BJ (cell line): ENCODE measurements at regions of chr17 and their contacts with region 1.

Region 1: DNA sequence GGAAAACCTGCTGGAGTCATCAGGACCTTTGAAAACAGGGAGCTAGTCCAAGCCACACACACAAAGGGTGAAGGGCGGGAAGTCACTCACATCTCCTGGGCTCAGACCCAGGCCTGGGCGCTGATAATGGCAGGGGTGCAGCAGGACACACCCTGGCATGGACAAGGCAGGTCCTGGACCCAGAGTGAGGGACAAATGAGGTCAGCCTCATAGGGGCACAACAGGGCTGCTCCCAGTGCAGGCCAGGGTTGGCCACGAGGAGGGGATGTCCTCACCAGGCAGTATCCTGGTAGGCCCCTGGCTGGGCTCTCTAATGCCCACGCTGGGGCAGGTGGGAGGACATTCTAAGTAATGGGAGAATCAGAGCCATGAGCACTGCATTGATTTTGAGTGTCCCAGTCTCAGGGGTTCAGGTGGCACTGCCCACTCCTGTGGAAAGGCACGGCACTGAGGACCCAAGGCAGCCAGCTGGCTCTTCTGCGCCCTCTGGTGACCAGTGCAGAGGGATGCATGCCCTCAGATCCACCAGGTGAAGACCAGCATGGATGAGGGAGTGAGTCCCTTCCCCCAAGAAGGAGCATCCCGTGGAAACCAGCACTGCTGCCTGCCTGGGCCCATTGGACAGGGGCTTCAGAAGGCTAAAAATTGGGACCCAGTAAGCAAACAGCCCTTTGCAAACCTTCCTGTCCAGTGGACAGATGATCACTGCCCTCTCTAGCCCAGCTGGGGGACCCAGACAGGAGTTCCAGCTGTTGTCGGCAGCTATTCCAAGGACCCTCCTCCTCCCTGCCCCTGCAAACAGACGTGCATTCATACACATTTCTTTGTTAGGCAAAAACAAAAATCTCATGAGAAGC is 23.4 kb upstream of the SREBF1 start:
- DNase-seq: no peak
- H3K4me3 ChIP-seq: no peak overlapping the region
- H3K27me3 ChIP-seq: no peaks in the 10 kb centered on the region
- CTCF ChIP-seq: peak; percentile 96

Region 2: GRCh38 chr17:17681187-17681848 is 178.8 kb before region 1 on chr17 and contains the start of gene RAI1:
- CTCF ChIA-PET with region 1: interaction called, 34 read pairs
- POLR2A ChIA-PET with region 1: no interaction called
- DNase-seq: no peak
- H3K4me3 ChIP-seq: peak within 1 kb of the TSS; percentile 80
- H3K27me3 ChIP-seq: no peaks in the 10 kb centered on the region
- CTCF ChIP-seq: 0 out of 2 replicates have a peak, but pooled peaks have one; percentile 6
- polyA plus RNA-seq, gene RAI1: 2.1 and 2.4 TPM in 2 replicates

Region 3: GRCh38 chr17:17836250-17836817 is 23.8 kb before region 1 on chr17:
- CTCF ChIA-PET with region 1: interaction called, 12 read pairs
- POLR2A ChIA-PET with region 1: no interaction called
- DNase-seq: peak; percentile 58
- H3K4me3 ChIP-seq: peak overlapping the region; percentile 90
- H3K27me3 ChIP-seq: no peaks in the 10 kb centered on the region
- CTCF ChIP-seq: no peak

Region 4: DNA sequence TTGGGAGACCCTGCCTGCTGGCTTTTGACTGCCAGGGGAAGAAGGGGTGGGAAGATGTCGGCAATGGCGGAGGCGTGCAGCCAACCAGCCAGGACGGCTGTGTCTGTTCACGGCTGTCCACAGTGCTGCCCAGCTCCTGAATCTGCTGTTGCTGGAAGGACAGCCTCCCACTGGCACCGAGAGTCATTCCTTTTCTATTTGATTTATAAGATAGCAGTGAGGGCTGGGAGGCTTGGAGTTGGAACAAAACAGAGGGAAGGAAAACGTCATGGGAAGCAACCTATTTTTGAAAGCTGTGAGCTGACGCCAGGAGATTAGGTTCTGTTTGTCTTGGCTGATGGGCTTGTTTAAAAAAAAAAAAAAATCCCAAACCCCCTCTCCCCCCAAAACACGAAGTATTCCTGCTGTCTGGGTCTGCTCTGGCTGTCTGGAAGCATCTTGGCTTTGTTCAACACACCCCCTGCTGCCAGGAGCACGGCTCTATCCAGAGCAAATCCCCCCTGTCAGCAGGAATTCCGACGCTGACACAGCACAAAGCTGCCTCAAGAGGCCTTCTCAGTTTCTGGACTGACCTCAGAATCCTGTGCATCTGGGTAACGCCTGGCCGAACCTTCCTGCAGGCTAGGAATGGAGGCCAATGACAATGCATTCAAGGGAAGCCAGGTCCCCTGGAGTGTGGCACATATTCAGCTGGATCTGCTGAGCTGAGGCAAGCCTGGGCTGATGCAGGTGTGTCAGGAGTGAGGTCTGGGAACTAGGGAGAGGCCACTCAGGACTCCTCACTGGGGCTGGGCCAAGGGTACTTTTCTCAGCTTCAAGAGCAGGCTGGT is 17.6 kb after region 1 on chr17:
- CTCF ChIA-PET with region 1: interaction called, 11 read pairs
- POLR2A ChIA-PET with region 1: no interaction called
- DNase-seq: peak; percentile 64
- H3K4me3 ChIP-seq: no peak overlapping the region
- H3K27me3 ChIP-seq: no peaks in the 10 kb centered on the region
- CTCF ChIP-seq: peak; percentile 25

Region 5: GRCh38 chr17:18033442-18034099 is 173.4 kb after region 1 on chr17:
- CTCF ChIA-PET with region 1: interaction called, 17 read pairs
- POLR2A ChIA-PET with region 1: no interaction called
- DNase-seq: no peak
- H3K4me3 ChIP-seq: no peak overlapping the region
- H3K27me3 ChIP-seq: no peaks in the 10 kb centered on the region
- CTCF ChIP-seq: peak; percentile 52